Activated CD4-positive, alpha-beta memory T cell treated with anti-CD3 and anti-CD28 coated beads for 36 hours (primary cell): ENCODE measurements at regions of chr2 and their contacts with region 1.

Region 1: DNA sequence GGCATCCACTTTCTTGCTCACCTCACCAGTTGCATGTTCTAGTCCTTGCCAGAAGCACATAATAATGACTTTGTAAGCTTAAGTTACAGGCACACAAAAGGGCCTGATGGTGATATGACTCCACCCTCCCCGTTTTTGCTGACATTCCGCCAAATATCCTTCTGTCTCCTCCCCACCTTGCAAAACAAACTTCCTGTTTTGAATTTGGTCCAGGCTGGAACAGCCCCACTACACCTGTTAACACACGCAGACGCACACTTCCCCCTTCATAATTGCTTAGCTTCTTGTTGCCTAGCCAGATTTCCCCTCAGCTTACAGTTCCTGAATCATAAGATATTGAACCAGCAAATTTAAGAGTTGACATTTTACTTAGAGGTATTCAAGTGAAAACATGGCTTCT is at the start of gene MGAT5:
- DNase-seq: no peak
- H3K4me3 Mint-ChIP-seq: no peak within 1 kb of the TSS
- H3K27ac Mint-ChIP-seq: no peak within 1 kb of the TSS
- H3K4me1 Mint-ChIP-seq: peaks cover 84% of the 10 kb centered on the region
- H3K27me3 Mint-ChIP-seq: no peaks in the 10 kb centered on the region
- total RNA-seq, gene MGAT5: 33.6 to 38.3 TPM

Region 2: DNA sequence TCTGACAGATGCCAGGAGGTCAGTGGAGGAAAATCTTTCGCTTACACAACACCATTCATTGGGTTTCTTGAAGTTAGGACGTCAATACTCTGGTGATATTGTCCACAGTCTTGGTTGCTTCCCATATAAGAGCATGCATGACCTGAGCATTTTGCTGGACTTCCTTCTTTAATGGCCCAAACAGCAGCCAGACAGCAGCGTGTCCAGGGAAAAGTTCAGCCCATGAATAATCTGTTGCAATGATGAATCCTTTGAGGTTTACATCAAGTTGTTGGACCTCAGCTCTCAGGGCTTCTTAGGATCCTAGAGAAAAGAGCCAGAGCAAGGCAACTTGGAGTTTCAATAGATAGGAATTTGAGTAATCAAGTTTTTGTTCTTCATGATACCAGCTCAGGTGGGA is 155.5 kb before region 1 on chr2:
- CTCF ChIA-PET with region 1: no interaction called
- POLR2A ChIA-PET with region 1: no interaction called
- intact Hi-C with region 1: no loop called
- DNase-seq: no peak
- H3K4me3 Mint-ChIP-seq: no peak overlapping the region
- H3K27ac Mint-ChIP-seq: no peak overlapping the region
- H3K4me1 Mint-ChIP-seq: no peaks in the 10 kb centered on the region
- H3K27me3 Mint-ChIP-seq: no peaks in the 10 kb centered on the region

Region 3: GRCh38 chr2:134127496-134127895 is 126.3 kb before region 1 on chr2:
- CTCF ChIA-PET with region 1: no interaction called
- POLR2A ChIA-PET with region 1: interaction called, 10 read pairs
- intact Hi-C with region 1: no loop called
- DNase-seq: peak; percentile 86
- H3K4me3 Mint-ChIP-seq: peak overlapping the region; percentile 25
- H3K27ac Mint-ChIP-seq: no peak overlapping the region
- H3K4me1 Mint-ChIP-seq: peaks cover 73% of the 10 kb centered on the region
- H3K27me3 Mint-ChIP-seq: no peaks in the 10 kb centered on the region

Region 4: GRCh38 chr2:134198006-134198634 is 55.7 kb before region 1 on chr2:
- CTCF ChIA-PET with region 1: interaction called, 3 read pairs
- POLR2A ChIA-PET with region 1: no interaction called
- intact Hi-C with region 1: loop called (anchors 1 kb)
- DNase-seq: no peak
- H3K4me3 Mint-ChIP-seq: peak overlapping the region; percentile 36
- H3K27ac Mint-ChIP-seq: peak overlapping the region; percentile 79
- H3K4me1 Mint-ChIP-seq: peaks cover 84% of the 10 kb centered on the region
- H3K27me3 Mint-ChIP-seq: no peaks in the 10 kb centered on the region

Region 5: GRCh38 chr2:134232868-134233727 is 20.7 kb before region 1 on chr2:
- CTCF ChIA-PET with region 1: interaction called, 12 read pairs
- POLR2A ChIA-PET with region 1: no interaction called
- intact Hi-C with region 1: loop called (anchors 1 kb)
- DNase-seq: peak; percentile 52
- H3K4me3 Mint-ChIP-seq: peak overlapping the region; percentile 34
- H3K27ac Mint-ChIP-seq: peak overlapping the region; percentile 93
- H3K4me1 Mint-ChIP-seq: peaks cover 90% of the 10 kb centered on the region
- H3K27me3 Mint-ChIP-seq: no peaks in the 10 kb centered on the region

Region 6: DNA sequence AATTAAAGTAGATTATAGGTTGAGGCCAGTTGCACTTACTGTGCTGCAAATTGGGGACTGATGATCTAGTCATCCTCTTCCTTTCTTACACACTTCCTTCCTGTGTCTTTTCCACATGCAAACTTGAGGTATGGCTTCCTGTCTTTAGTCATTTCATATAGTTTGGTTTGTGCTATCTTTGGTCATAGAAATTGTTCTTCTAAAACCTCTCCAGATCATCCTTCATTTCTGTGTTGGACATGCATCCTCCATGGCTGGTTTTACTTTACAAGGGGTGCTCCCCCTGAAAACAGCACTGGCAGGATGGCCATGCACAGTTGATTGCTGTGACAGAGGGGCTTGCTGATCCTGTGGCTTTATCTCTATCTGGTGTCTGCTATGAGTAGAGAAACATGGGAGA is 36.6 kb after region 1 on chr2:
- CTCF ChIA-PET with region 1: no interaction called
- POLR2A ChIA-PET with region 1: interaction called, 7 read pairs
- intact Hi-C with region 1: loop called (anchors 1 kb)
- DNase-seq: peak; percentile 31
- H3K4me3 Mint-ChIP-seq: no peak overlapping the region
- H3K27ac Mint-ChIP-seq: no peak overlapping the region
- H3K4me1 Mint-ChIP-seq: peaks cover 21% of the 10 kb centered on the region
- H3K27me3 Mint-ChIP-seq: no peaks in the 10 kb centered on the region

Region 7: DNA sequence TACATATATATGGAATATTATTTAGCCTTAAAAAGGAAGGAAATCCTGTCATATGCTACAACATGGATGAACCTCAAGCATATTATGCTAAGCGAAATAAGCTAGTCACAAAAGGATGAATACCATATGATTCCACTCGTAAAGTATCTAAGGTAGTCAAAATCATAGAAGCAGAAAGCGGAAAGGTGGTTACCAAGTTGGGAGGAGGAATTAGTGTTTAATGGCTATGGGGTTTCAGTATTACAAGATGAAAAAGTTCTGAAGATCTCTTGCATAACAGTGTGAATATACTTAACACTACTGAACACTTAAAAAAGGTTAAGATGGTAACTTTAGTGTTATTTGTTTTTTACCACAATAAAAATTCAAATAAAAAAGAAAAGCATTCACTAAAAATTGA is 99.0 kb after region 1 on chr2:
- CTCF ChIA-PET with region 1: no interaction called
- POLR2A ChIA-PET with region 1: no interaction called
- intact Hi-C with region 1: no loop called
- DNase-seq: no peak
- H3K4me3 Mint-ChIP-seq: no peak overlapping the region
- H3K27ac Mint-ChIP-seq: no peak overlapping the region
- H3K4me1 Mint-ChIP-seq: no peaks in the 10 kb centered on the region
- H3K27me3 Mint-ChIP-seq: no peaks in the 10 kb centered on the region

Region 8: GRCh38 chr2:134368009-134368817 is 114.4 kb after region 1 on chr2:
- CTCF ChIA-PET with region 1: no interaction called
- POLR2A ChIA-PET with region 1: no interaction called
- intact Hi-C with region 1: loop called (anchors 5 kb)
- DNase-seq: peak; percentile 18
- H3K4me3 Mint-ChIP-seq: no peak overlapping the region
- H3K27ac Mint-ChIP-seq: no peak overlapping the region
- H3K4me1 Mint-ChIP-seq: peaks cover 28% of the 10 kb centered on the region
- H3K27me3 Mint-ChIP-seq: no peaks in the 10 kb centered on the region

Region 9: DNA sequence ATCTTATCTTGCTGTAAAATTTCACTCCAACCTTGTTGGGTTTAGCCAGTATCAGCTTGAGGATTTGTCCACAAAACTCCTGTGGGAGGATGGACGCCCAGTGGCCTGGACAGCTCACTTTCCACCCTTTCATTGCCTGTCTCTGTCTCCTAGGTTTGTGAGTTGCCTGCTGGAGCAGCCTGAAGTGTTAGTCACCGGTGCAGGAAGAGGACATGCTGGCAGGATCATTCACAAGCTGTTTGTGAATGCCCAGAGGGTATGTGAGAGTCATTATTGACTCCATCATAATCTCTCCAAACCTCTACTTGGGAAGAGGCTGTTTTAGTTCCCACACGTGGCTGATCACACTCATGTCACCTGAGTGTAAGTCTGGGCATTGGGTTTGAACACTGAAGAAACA is 910.6 kb after region 1 on chr2:
- CTCF ChIA-PET with region 1: no interaction called
- POLR2A ChIA-PET with region 1: no interaction called
- intact Hi-C with region 1: no loop called
- DNase-seq: no peak
- H3K4me3 Mint-ChIP-seq: no peak overlapping the region
- H3K27ac Mint-ChIP-seq: no peak overlapping the region
- H3K4me1 Mint-ChIP-seq: peaks cover 13% of the 10 kb centered on the region
- H3K27me3 Mint-ChIP-seq: no peaks in the 10 kb centered on the region